ENCODE measurements at regions of chr2 and their contacts with region 1.

Region 1: DNA sequence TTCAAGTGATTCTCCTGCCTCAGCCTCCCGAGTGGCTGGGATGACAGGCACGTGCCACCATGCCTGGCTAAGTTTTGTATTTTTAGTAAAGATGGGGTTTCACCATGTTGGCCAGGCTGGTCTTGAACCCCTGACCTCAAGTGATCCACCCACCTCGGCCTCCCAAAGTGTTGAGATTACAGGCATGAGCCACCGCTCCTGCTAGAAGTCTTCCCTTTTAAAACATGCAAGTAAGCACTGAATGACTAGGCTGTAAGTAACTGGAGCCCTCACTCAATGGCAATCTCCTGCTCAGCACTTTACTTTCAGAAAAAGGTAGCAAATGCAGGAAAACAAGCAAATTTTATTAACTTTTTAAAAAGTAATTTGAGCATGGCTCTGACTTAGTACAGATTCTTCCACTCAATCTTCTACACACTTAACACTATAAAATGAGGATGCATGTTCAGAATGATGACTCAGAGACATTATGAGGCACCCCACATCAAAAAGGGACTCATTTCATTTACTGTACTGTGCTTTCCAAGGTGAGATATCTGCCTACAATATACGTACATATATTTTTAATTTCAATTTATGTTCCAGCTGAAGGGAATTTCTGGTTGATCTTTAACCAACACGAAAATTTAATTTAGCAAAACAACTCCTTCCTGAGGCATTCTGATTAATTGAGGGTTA is 6.6 kb upstream of the NCK2 start:
- DNase-seq: peak; percentile 45
- H3K4me3 Mint-ChIP-seq: peak overlapping the region; percentile 69
- H3K27ac Mint-ChIP-seq: peak overlapping the region; percentile 97
- H3K4me1 Mint-ChIP-seq: peaks cover 71% of the 10 kb centered on the region
- H3K27me3 Mint-ChIP-seq: no peaks in the 10 kb centered on the region

Region 2: DNA sequence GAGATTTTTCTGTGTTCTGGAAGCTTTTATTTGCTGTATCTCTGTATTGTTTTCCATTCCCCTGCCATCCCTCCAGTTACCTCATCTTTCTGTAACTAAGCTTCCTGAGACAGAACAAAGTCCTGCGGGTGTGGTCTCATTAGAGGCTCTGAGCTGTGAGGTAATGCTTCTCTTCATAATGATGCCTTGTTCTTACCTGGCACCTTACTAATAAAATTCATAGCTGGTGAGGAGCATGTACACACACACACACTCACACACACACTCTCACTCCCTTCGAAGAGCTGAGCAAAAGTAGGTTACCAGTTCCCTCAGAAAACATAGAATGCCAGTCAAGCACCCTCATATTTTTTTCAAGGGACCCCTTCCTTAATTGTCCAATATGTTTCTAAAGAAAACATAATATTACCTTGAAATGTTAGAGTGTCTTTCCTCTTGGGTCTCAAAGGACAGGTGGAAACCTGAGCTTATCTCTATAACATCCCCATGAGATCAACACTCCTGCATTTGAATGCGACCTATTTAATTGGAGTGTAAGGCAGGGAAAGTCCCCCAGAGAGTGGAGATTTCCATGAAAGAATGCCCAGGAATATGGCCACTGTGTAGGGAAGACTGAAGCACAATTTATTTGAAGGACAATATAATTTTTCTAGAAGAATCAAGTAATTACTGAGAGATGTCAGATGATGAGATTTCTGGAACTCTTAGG is 155.0 kb before region 1 on chr2:
- CTCF ChIA-PET with region 1: no interaction called
- intact Hi-C with region 1: loop called (anchors 1 kb)
- DNase-seq: peak; percentile 12
- H3K4me3 Mint-ChIP-seq: no peak overlapping the region
- H3K27ac Mint-ChIP-seq: no peak overlapping the region
- H3K4me1 Mint-ChIP-seq: peaks cover 33% of the 10 kb centered on the region
- H3K27me3 Mint-ChIP-seq: no peaks in the 10 kb centered on the region

Region 3: GRCh38 chr2:105645031-105645937 is 92.8 kb before region 1 on chr2:
- CTCF ChIA-PET with region 1: no interaction called
- intact Hi-C with region 1: loop called (anchors 2 kb)
- DNase-seq: no peak
- H3K4me3 Mint-ChIP-seq: no peak overlapping the region
- H3K27ac Mint-ChIP-seq: no peak overlapping the region
- H3K4me1 Mint-ChIP-seq: no peaks in the 10 kb centered on the region
- H3K27me3 Mint-ChIP-seq: no peaks in the 10 kb centered on the region

Region 4: DNA sequence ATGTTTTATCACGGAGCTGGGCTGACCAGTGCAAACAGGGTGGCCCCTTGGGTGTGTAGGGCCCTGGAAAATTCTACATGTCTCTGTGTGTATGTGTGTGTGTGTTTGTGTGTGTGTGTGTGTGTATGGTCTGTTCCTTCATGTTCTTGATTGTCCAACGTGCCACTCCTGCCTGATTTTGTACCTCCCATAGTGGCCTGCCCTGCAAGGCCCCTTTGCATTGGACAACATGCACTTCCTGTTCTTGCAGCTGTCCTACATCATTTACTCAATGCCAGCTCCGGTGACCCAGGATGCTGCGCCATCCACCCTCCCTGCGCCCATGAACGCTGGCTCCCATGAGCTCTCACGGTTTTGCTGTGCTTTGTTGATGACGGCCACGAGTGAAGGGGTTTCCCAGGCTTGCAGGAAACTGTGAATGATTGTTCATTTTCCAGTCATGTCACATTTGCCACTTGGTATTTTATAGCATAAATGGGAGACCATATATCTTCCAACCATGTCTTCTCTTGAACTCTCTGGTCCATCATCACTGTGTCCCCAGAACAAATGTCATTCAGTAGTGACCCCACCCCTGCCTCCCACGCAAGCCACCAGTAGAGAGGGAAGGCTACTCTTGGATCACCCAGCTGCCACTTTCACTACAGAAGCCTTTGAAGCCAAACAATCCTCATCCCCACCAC is 63.1 kb before region 1 on chr2:
- CTCF ChIA-PET with region 1: no interaction called
- intact Hi-C with region 1: loop called (anchors 1 kb)
- DNase-seq: peak; percentile 79
- H3K4me3 Mint-ChIP-seq: no peak overlapping the region
- H3K27ac Mint-ChIP-seq: peak overlapping the region; percentile 86
- H3K4me1 Mint-ChIP-seq: peaks cover 19% of the 10 kb centered on the region
- H3K27me3 Mint-ChIP-seq: no peaks in the 10 kb centered on the region

Measured in activated naive CD4-positive, alpha-beta T cell treated with anti-CD3 and anti-CD28 coated beads for 36 hours (primary cell).